Activated B cell treated with CpG ODN at 0.5 μM for 24 hours (primary cell): ENCODE measurements at regions of chr9 and their contacts with region 1.

Region 1: GRCh38 chr9:72443855-72444254 is 77.6 kb upstream of the TMC1 start:
- DNase-seq: no peak
- ATAC-seq: peak; percentile 91
- H3K4me3 Mint-ChIP-seq: peak overlapping the region; percentile 59
- H3K27ac Mint-ChIP-seq: peak overlapping the region; percentile 91
- H3K4me1 Mint-ChIP-seq: peaks cover 37% of the 10 kb centered on the region
- H3K27me3 Mint-ChIP-seq: no peaks in the 10 kb centered on the region
- CTCF ChIP-seq: no peak

Region 2: DNA sequence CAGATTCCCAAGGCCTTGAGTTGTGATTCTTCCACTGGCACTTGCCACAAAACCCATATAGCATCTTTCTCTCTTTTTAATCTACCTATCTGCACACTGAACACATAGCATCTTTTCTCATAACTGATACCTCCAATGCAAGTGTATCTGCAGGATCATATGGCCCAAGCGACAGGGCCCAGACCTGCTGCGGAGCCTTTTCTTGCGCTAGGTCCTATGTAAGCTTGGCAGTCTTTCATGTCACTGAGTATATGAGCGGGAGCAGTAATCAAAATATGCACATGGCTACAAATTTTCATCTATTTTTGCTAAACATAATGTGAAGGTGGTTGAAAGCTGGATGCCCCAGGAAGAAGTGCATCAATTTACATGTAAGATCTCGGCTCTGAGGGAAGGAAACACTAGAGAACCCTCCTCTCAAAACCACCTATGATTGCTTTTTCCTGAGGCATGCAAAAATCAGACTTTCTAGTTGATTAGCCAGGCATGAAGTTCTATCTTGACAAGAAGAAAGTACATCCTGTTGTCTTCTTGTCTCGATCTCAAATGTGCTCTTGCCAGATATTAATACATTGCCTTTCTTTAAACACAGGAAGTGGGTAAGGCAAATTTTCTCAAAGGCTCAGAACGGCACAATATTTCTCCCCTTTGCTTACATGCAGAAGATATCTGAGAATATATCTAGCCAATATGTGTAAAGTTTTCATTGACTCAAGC is 648.6 kb before region 1 on chr9:
- CTCF ChIA-PET with region 1: no interaction called
- POLR2A ChIA-PET with region 1: interaction called, 3 read pairs
- intact Hi-C with region 1: loop called (anchors 10 kb)
- DNase-seq: no peak
- ATAC-seq: peak; percentile 84
- H3K4me3 Mint-ChIP-seq: peak overlapping the region; percentile 67
- H3K27ac Mint-ChIP-seq: peak overlapping the region; percentile 87
- H3K4me1 Mint-ChIP-seq: peaks cover 79% of the 10 kb centered on the region
- H3K27me3 Mint-ChIP-seq: no peaks in the 10 kb centered on the region
- CTCF ChIP-seq: no peak

Region 3: DNA sequence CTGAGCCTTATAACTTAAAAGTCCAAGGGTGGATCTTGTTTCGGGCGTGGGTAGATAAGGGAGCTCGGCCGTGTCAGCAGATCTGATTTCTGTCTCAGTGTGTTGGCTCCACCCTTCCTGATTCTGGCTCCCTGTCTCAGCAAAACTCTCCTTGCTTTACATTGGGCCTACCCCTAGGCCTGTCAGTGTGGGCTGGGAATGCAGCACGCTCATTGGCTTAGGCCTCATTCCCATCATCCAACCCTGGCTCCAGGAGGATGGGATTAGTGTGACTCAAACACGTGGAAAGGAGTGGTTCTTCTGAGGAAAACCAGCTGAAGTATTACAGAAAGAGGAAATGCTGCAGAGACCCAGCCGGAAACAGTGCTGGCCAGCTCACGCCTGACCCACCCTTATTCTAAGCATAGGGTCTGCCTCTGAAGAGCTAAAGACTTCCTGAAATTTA is 138.7 kb before region 1 on chr9:
- CTCF ChIA-PET with region 1: no interaction called
- POLR2A ChIA-PET with region 1: interaction called, 5 read pairs
- intact Hi-C with region 1: loop called (anchors 5 kb)
- DNase-seq: peak; percentile 35
- ATAC-seq: peak; percentile 79
- H3K4me3 Mint-ChIP-seq: peak overlapping the region; percentile 73
- H3K27ac Mint-ChIP-seq: peak overlapping the region; percentile 95
- H3K4me1 Mint-ChIP-seq: peaks cover 62% of the 10 kb centered on the region
- H3K27me3 Mint-ChIP-seq: no peaks in the 10 kb centered on the region
- CTCF ChIP-seq: no peak

Region 4: GRCh38 chr9:72394066-72394465 is 49.8 kb before region 1 on chr9:
- CTCF ChIA-PET with region 1: no interaction called
- POLR2A ChIA-PET with region 1: no interaction called
- intact Hi-C with region 1: loop called (anchors 5 kb)
- DNase-seq: no peak
- ATAC-seq: no peak
- H3K4me3 Mint-ChIP-seq: no peak overlapping the region
- H3K27ac Mint-ChIP-seq: no peak overlapping the region
- H3K4me1 Mint-ChIP-seq: no peaks in the 10 kb centered on the region
- H3K27me3 Mint-ChIP-seq: peaks cover 6% of the 10 kb centered on the region
- CTCF ChIP-seq: no peak

Region 5: GRCh38 chr9:72415163-72415562 is 28.7 kb before region 1 on chr9:
- CTCF ChIA-PET with region 1: no interaction called
- POLR2A ChIA-PET with region 1: no interaction called
- intact Hi-C with region 1: no loop called
- DNase-seq: no peak
- ATAC-seq: no peak
- H3K4me3 Mint-ChIP-seq: no peak overlapping the region
- H3K27ac Mint-ChIP-seq: no peak overlapping the region
- H3K4me1 Mint-ChIP-seq: no peaks in the 10 kb centered on the region
- H3K27me3 Mint-ChIP-seq: no peaks in the 10 kb centered on the region
- CTCF ChIP-seq: no peak

Region 6: DNA sequence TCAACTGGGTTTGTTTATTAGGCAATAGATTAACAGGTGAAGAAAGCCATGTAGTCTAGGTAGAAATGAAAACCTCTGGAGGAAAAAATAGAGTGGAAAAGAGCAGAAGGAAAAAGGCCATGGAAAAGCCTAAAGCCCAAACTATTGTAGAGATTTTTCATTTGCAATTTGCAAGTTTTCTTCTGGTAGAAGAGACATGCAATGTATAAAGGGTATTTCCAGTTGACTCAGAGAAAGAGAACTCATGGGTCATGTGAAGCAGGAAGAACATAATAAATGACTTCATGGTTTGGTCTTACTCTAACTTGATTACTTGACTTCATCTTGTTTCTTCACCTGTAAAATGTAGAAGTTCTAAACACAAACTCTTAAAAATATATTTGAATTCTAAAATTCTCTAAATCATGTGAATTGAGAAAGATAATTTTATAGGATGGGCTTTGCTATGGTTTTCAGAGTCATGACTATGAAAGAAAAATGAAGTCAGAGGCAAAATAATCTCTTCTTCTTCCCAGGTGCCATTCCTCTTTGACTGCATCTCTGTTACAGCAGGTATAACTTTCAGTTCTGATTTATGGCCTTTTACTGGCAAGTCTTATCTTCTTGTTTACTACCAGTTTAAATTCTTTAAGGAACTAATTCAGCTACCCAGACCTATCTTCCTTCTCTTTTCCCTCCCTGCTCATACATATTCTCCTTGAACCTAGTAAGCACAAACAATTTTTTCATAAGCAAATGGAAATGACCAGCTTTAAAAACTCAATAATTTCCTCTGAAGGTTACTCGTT is 29.8 kb after region 1 on chr9:
- CTCF ChIA-PET with region 1: no interaction called
- POLR2A ChIA-PET with region 1: interaction called, 5 read pairs
- intact Hi-C with region 1: loop called (anchors 5 kb)
- DNase-seq: no peak
- ATAC-seq: peak; percentile 78
- H3K4me3 Mint-ChIP-seq: no peak overlapping the region
- H3K27ac Mint-ChIP-seq: peak overlapping the region; percentile 75
- H3K4me1 Mint-ChIP-seq: peaks cover 12% of the 10 kb centered on the region
- H3K27me3 Mint-ChIP-seq: no peaks in the 10 kb centered on the region
- CTCF ChIP-seq: no peak

Region 7: GRCh38 chr9:72592502-72593403 is 148.9 kb after region 1 on chr9:
- CTCF ChIA-PET with region 1: no interaction called
- POLR2A ChIA-PET with region 1: no interaction called
- intact Hi-C with region 1: loop called (anchors 1 kb)
- DNase-seq: no peak
- ATAC-seq: peak; percentile 68
- H3K4me3 Mint-ChIP-seq: no peak overlapping the region
- H3K27ac Mint-ChIP-seq: no peak overlapping the region
- H3K4me1 Mint-ChIP-seq: peaks cover 4% of the 10 kb centered on the region
- H3K27me3 Mint-ChIP-seq: peaks cover 2% of the 10 kb centered on the region
- CTCF ChIP-seq: peak; percentile 41